Common myeloid progenitor, CD34-positive (primary cell): ENCODE measurements at regions of chr1 and their contacts with region 1.

Region 1: DNA sequence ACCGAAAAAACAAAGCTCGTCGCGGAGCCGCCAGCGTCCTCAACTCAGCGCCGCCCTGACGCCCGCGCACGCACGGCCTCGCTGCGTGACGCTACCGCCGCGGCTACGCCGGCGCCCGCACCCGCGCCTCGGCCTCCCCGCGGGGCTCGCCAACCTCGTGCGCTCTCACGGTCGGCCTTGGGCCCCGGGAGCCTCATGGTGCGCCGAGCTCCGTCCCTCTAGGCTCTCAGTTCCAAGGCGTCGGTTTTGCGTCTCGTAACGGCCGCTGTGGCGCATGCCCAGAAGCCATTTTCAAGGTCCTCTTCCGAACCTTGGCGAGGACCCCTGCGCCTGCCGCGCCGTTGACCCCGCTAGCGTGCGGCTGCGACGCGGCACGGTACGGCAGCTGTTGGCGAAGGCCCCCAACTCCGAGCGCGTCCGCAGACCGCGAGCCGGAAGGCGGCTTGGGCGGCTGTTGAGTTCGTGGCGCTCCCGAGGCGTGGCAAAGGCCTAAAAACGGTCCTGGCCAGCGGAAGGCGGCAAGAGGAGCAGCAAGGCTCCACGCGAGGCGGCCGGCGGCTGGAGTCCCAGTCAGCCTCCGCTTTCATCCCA is at the start of gene HENMT1:
- DNase-seq: peak; percentile 91 to 95 (median 94)
- H3K4me3 ChIP-seq: peak within 1 kb of the TSS; percentile 35 to 80 (median 63)
- H3K27ac ChIP-seq: peak within 1 kb of the TSS; percentile 89 to 94
- H3K4me1 ChIP-seq: peaks cover 17 to 58% (median 32%) of the 10 kb centered on the region in 4 experiments
- H3K27me3 ChIP-seq: no peaks in the 10 kb centered on the region

Region 2: DNA sequence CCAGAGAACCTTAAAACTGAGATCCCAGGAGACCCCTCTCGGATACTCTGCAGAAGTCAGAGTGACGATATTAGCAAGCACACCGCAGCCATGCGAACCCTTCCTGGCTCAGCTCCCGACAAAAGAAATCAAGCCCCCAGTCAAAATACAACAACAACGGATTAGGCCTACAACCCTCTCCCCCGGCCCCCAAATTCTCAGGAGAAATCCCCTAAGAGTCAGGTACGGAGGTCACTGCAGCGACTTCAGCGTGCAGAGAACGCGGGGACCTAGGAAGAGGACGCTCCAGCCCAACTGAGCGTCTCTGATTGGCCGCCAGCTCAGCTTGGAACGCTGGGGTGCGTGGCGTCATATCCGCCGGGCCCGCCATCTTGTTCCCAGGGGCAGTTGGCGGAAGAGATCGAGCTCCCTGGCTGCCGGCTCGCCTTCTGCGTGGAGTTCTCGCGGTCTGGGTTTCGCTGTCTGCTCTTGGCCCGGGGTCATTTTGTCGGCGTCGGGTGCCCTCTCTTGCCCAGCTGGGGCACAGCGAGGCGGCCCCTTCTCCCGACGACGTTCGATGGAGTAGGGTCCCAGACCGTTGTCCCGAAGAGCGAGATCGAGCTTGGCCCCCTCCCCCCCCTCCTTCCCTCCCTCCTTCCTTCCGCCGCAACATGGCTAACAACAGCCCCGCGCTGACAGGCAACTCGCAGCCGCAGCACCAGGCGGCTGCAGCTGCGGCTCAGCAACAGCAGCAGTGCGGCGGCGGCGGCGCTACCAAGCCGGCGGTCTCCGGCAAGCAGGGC is 31.0 kb after region 1 on chr1 and contains the start of gene PRPF38B:
- CTCF ChIA-PET with region 1: interaction called, 7 read pairs
- POLR2A ChIA-PET with region 1: interaction called, 26 read pairs
- DNase-seq: peak; percentile 94 to 98 (median 97)
- H3K4me3 ChIP-seq: peak within 1 kb of the TSS; percentile 76 to 99 (median 88)
- H3K27ac ChIP-seq: peak within 1 kb of the TSS; percentile 91 to 98
- H3K4me1 ChIP-seq: peaks cover 9 to 49% (median 33%) of the 10 kb centered on the region in 4 experiments
- H3K27me3 ChIP-seq: no peaks in the 10 kb centered on the region